ENCODE measurements at regions of chr18 and their contacts with region 1.

Region 1: GRCh38 chr18:20971886-20972267 is 139.7 kb downstream of the ROCK1 start:
- DNase-seq: no peak
- ATAC-seq: no peak
- H3K4me3 ChIP-seq: no peak overlapping the region
- H3K27ac ChIP-seq: no peak overlapping the region
- H3K4me1 ChIP-seq: no peaks in the 10 kb centered on the region
- H3K27me3 ChIP-seq: no peaks in the 10 kb centered on the region

Region 2: GRCh38 chr18:21179590-21180220 is 207.8 kb after region 1 on chr18:
- intact Hi-C with region 1: loop called in 1 of 2 experiments (anchors 5 kb)
- DNase-seq: no peak
- ATAC-seq: peak; percentile 78
- H3K4me3 ChIP-seq: no peak overlapping the region
- H3K27ac ChIP-seq: no peak overlapping the region
- H3K4me1 ChIP-seq: no peaks in the 10 kb centered on the region
- H3K27me3 ChIP-seq: no peaks in the 10 kb centered on the region

Measured in aorta (tissue), 5 donors.